ENCODE measurements at regions of chr10 and their contacts with region 1.

Region 1: DNA sequence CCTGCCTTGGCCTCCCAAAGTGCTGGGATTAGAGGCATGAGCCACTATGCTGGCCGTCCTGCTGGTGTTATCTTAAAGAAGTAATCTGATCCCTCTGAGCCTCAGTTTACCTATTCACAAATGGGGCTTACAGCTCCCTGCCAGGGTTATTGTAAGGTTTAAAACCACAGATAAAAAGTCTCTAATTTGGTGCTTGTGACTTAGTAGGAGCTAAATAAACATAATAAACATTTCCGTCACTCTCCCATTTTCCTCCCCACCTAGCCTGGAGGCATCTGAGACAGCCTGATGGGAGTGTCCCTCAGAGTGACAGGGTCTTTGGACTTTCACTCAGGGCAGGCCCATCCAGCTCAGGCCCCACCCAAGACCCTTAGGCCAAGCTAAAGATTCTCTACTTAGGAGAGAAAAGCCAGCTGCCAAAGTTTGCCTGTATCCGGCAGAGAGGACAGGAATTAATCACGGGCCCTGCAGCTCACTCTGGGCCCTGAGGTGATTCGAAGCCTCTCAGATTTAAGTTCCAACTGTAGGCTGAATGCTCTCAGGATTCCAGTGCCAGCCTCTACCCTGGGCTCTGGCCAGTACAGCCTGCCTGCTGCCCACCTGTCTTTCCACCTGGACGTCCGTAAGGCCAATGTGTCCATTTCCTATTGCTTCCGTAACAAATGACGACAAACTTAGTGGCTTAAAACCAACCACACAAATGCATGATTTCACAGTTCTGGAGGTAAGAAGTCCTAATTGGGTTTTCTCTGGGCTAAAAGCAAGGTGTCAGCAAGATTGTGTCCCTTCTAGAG is 21.8 kb upstream of the DUSP5 start:
- DNase-seq: no peak
- ATAC-seq: no peak
- H3K4me3 ChIP-seq: no peak overlapping the region
- H3K4me3 Mint-ChIP-seq: no peak overlapping the region
- H3K27ac ChIP-seq: no peak overlapping the region
- H3K27ac Mint-ChIP-seq: no peak overlapping the region
- H3K4me1 ChIP-seq: no peaks in the 10 kb centered on the region
- H3K4me1 Mint-ChIP-seq: no peaks in the 10 kb centered on the region
- H3K27me3 ChIP-seq: no peaks in the 10 kb centered on the region
- H3K27me3 Mint-ChIP-seq: no peaks in the 10 kb centered on the region
- CTCF ChIP-seq: no peak

Region 2: GRCh38 chr10:110516815-110517645 is 41.1 kb after region 1 on chr10:
- CTCF ChIA-PET with region 1: no interaction called
- POLR2A ChIA-PET with region 1: no interaction called
- intact Hi-C with region 1: loop called in 1 of 2 experiments (anchors 5 kb)
- DNase-seq: no peak
- ATAC-seq: no peak
- H3K4me3 ChIP-seq: no peak overlapping the region
- H3K4me3 Mint-ChIP-seq: no peak overlapping the region
- H3K27ac ChIP-seq: no peak overlapping the region
- H3K27ac Mint-ChIP-seq: no peak overlapping the region
- H3K4me1 ChIP-seq: no peaks in the 10 kb centered on the region
- H3K4me1 Mint-ChIP-seq: no peaks in the 10 kb centered on the region
- H3K27me3 ChIP-seq: no peaks in the 10 kb centered on the region
- H3K27me3 Mint-ChIP-seq: no peaks in the 10 kb centered on the region
- CTCF ChIP-seq: no peak

Measured in CD8-positive, alpha-beta T cell (primary cell).